CD4-positive, alpha-beta memory T cell (primary cell): ENCODE measurements at regions of chr1 and their contacts with region 1.

Region 1: DNA sequence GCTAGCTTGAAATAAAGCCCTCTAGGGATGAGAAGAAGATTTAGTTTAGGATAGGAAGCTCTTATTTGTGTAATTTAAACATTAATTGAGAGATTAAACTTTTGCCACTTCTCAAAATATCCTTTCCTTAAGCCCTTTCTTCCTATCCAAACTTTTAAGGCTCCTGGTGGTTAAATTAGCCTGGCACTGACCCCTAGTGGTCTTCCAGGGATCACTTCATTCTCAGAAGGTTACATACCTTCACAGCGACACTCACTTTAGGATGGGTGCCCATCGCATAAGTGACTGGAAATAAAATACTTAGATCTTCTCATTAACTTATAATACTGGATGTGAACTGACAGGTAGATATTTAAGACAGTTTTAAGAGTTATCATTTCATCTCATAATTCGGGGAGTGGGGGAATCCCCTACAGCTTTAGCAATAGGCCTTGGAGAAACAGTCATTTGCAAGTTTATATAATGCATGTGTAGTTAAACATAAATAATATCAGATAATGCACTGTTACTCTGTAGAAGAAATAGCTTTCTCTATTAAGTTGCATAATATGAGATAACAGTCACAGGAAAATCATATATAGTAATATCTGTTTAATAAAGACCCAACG is 7.4 kb downstream of the LHX9 start:
- DNase-seq: peak in 1 of 5 donors; percentile 47
- H3K4me3 ChIP-seq: no peak overlapping the region
- H3K4me3 Mint-ChIP-seq: no peak overlapping the region
- H3K27ac ChIP-seq: no peak overlapping the region
- H3K27ac Mint-ChIP-seq: no peak overlapping the region
- H3K4me1 ChIP-seq: peaks cover 18% of the 10 kb centered on the region
- H3K4me1 Mint-ChIP-seq: peaks cover 11 to 23% (median 17%) of the 10 kb centered on the region in 4 donors
- H3K27me3 ChIP-seq: peaks cover 43% of the 10 kb centered on the region
- H3K27me3 Mint-ChIP-seq: peaks cover 54 to 57% of the 10 kb centered on the region in 2 donors

Region 2: GRCh38 chr1:197521118-197521739 is 403.4 kb before region 1 on chr1:
- CTCF ChIA-PET with region 1: interaction called, 16 read pairs
- POLR2A ChIA-PET with region 1: no interaction called
- intact Hi-C with region 1: loop called (anchors 1 kb)
- DNase-seq: peak in 4 of 5 donors; percentile 15 to 34 (median 28)
- H3K4me3 ChIP-seq: no peak overlapping the region
- H3K4me3 Mint-ChIP-seq: no peak overlapping the region
- H3K27ac ChIP-seq: no peak overlapping the region
- H3K27ac Mint-ChIP-seq: no peak overlapping the region
- H3K4me1 ChIP-seq: no peaks in the 10 kb centered on the region
- H3K4me1 Mint-ChIP-seq: peaks cover 0 to 2% (median under 1%) of the 10 kb centered on the region in 4 donors
- H3K27me3 ChIP-seq: no peaks in the 10 kb centered on the region
- H3K27me3 Mint-ChIP-seq: no peaks in the 10 kb centered on the region

Region 3: GRCh38 chr1:197614916-197615692 is 309.5 kb before region 1 on chr1:
- CTCF ChIA-PET with region 1: interaction called, 26 read pairs
- POLR2A ChIA-PET with region 1: no interaction called
- intact Hi-C with region 1: loop called (anchors 1 kb)
- DNase-seq: peak in 4 of 5 donors; percentile 1 to 23 (median 12)
- H3K4me3 ChIP-seq: no peak overlapping the region
- H3K4me3 Mint-ChIP-seq: no peak overlapping the region
- H3K27ac ChIP-seq: no peak overlapping the region
- H3K27ac Mint-ChIP-seq: no peak overlapping the region
- H3K4me1 ChIP-seq: no peaks in the 10 kb centered on the region
- H3K4me1 Mint-ChIP-seq: no peaks in the 10 kb centered on the region
- H3K27me3 ChIP-seq: no peaks in the 10 kb centered on the region
- H3K27me3 Mint-ChIP-seq: no peaks in the 10 kb centered on the region

Region 4: GRCh38 chr1:198359024-198359653 is 434.5 kb after region 1 on chr1:
- CTCF ChIA-PET with region 1: no interaction called
- POLR2A ChIA-PET with region 1: no interaction called
- intact Hi-C with region 1: loop called (anchors 5 kb)
- DNase-seq: peak in 4 of 5 donors; percentile 8 to 28 (median 10)
- H3K4me3 ChIP-seq: no peak overlapping the region
- H3K4me3 Mint-ChIP-seq: no peak overlapping the region
- H3K27ac ChIP-seq: no peak overlapping the region
- H3K27ac Mint-ChIP-seq: no peak overlapping the region
- H3K4me1 ChIP-seq: no peaks in the 10 kb centered on the region
- H3K4me1 Mint-ChIP-seq: no peaks in the 10 kb centered on the region
- H3K27me3 ChIP-seq: no peaks in the 10 kb centered on the region
- H3K27me3 Mint-ChIP-seq: peaks cover 2 to 3% of the 10 kb centered on the region in 2 donors